HAP-1 (cell line): ENCODE measurements at regions of chr17 and their contacts with region 1.

Region 1: DNA sequence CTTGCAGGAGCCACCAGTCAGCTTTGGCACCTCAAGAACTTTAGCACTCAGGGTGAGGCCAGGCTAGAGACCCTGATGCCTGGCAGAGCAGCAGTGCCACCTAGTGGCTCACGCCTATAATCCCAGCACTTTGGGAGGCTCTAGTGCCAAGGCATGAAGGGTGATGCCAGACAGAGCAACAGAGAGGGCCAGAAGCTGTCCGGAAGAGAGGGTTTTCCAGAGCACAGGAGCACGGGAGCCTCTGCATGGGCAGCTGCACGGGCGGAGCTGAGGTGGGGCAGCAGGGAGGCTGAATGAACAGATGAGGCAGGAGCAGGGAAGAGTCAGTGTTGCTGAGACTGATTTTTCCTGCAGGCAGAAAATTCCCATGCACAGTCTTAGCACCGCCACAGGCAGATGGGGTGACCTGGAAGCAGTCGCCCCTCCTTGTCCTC is 38.9 kb downstream of the MYH3 start:
- DNase-seq: peak; percentile 29 to 69
- H3K4me3 ChIP-seq: no peak overlapping the region
- H3K4me1 ChIP-seq: no peaks in the 10 kb centered on the region
- H3K27me3 ChIP-seq: no peaks in the 10 kb centered on the region

Region 2: GRCh38 chr17:9912121-9913099 is 705.8 kb before region 1 on chr17:
- in situ Hi-C with region 1: loop called (anchors 10 kb)
- DNase-seq: no peak
- H3K4me3 ChIP-seq: no peak overlapping the region
- H3K4me1 ChIP-seq: no peaks in the 10 kb centered on the region
- H3K27me3 ChIP-seq: no peaks in the 10 kb centered on the region

Region 3: GRCh38 chr17:10327640-10328039 is 290.6 kb before region 1 on chr17:
- in situ Hi-C with region 1: loop called (anchors 10 kb)
- DNase-seq: peak; percentile 19 to 82
- H3K4me3 ChIP-seq: no peak overlapping the region
- H3K4me1 ChIP-seq: no peaks in the 10 kb centered on the region
- H3K27me3 ChIP-seq: no peaks in the 10 kb centered on the region

Region 4: DNA sequence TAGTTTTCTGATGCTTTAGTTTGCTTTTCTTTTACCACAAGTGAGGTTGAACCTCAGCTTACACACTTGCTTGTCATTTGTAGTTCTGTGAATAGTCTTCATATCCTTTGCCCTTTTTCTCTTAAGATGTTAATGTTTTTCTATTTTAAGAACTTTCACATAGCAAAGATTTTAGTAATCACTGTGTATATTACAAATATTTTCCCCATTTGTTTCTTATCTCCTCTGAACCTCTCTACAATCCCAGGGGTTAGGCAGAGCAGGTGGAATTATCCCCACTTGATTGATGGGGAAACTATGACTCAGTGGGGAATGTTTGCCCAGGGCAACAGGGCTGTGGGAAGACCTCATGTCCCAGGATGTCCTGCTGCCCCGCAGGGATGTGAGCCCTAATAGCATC is 50.6 kb after region 1 on chr17:
- in situ Hi-C with region 1: no loop called
- DNase-seq: no peak
- H3K4me3 ChIP-seq: no peak overlapping the region
- H3K4me1 ChIP-seq: no peaks in the 10 kb centered on the region
- H3K27me3 ChIP-seq: no peaks in the 10 kb centered on the region